ENCODE measurements at regions of chr4 and their contacts with region 1.

Region 1: DNA sequence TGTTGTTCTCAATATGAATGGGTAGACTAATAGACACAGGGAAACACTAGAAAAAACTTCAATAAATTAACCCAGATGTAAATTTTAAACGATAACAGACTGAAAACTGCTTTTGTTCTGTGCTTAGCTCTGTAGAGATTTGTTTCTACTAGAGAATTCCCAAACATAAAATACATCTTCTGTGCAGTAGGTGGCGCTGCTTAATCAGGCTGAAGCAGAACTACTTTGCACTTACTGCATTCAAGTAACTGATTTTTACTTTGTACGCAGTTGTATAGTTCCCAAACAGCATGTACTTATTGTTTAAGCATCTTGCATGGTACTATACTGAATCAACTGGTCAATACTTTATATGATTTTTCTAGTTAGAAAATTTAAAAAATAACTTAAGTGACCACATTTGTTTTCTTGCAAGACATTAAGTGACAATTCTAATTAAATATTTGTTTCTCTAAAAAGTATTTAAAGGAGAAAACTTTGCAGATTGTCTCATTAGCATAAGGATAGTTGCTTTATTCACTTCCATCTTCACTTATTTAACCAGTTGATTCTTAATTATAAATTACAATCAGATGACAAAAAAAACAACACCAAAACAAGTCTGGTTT is 490.6 kb downstream of the IL15 start:
- DNase-seq: peak; percentile 66
- ATAC-seq: peak; percentile 77
- H3K4me3 ChIP-seq: no peak overlapping the region
- H3K27ac ChIP-seq: no peak overlapping the region; the same call in 1 of the 2 replicates
- H3K4me1 ChIP-seq: 0 out of 4 replicates have a peak, but pooled peaks cover 0 to 3% of the 10 kb centered on the region in 2 experiments
- H3K27me3 ChIP-seq: no peaks in the 10 kb centered on the region
- CTCF ChIP-seq: peak; percentile 59 to 87 (median 63); a peak in 5 of 6 replicates
- POLR2A ChIP-seq: no peak
- RAD21 ChIP-seq: peak; percentile 93

Region 2: DNA sequence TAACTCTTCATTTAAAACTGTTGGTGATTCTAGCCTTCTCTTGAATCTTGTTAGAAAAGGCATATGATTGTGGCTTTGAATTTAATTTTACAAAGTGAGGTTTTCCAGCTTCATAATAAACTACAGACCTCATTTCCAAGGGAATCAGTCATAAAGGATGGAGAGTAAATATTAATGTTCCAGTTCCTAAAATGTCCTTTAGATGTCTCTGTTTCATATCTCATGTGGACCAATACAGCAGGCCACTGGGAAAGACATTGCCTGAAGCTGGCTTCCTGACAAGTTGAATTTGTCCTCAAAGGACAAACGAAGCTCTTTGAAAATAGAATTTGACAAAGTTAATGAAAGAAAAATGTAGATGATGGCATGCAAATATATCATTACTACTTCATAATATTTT is 780.9 kb before region 1 on chr4:
- CTCF ChIA-PET with region 1: interaction called, 4 read pairs
- POLR2A ChIA-PET with region 1: no interaction called
- RAD21 ChIA-PET with region 1: no interaction called
- intact Hi-C with region 1: loop called (anchors 10 kb)
- DNase-seq: peak; percentile 24
- ATAC-seq: peak; percentile 87
- H3K4me3 ChIP-seq: no peak overlapping the region
- H3K27ac ChIP-seq: no peak overlapping the region
- H3K4me1 ChIP-seq: peaks cover 0 to 4% of the 10 kb centered on the region in 2 experiments; a peak in 1 of 4 replicates
- H3K27me3 ChIP-seq: no peaks in the 10 kb centered on the region
- CTCF ChIP-seq: peak; percentile 24 to 63 (median 53); a peak in 3 of 6 replicates
- POLR2A ChIP-seq: no peak
- RAD21 ChIP-seq: peak; percentile 80

Region 3: GRCh38 chr4:141768954-141769353 is 358.0 kb before region 1 on chr4:
- CTCF ChIA-PET with region 1: no interaction called
- POLR2A ChIA-PET with region 1: no interaction called
- RAD21 ChIA-PET with region 1: no interaction called
- intact Hi-C with region 1: no loop called
- DNase-seq: no peak
- ATAC-seq: no peak
- H3K4me3 ChIP-seq: no peak overlapping the region
- H3K27ac ChIP-seq: no peak overlapping the region
- H3K4me1 ChIP-seq: no peaks in the 10 kb centered on the region
- H3K27me3 ChIP-seq: no peaks in the 10 kb centered on the region
- CTCF ChIP-seq: no peak
- POLR2A ChIP-seq: no peak
- RAD21 ChIP-seq: no peak

Region 4: DNA sequence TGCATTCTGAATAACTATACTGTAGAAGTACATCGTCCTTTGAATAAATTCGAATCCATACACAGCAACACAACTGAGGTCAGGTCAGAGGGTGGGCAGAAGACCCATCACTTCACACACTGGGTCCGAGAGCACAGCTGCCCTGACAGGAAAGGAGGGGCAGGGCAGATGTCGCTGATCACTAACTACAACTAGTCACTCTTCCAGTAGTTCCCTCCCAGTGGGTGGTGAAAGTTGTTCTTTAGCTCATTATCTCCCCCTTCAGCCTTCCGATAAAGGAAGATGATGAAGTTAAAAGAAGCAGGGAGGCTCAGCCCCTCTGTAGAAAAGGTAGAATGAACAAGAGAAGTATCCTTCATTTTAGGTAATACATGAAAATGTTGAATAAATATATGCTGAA is 440.2 kb after region 1 on chr4:
- CTCF ChIA-PET with region 1: no interaction called
- POLR2A ChIA-PET with region 1: no interaction called
- RAD21 ChIA-PET with region 1: no interaction called
- intact Hi-C with region 1: loop called (anchors 10 kb)
- DNase-seq: peak; percentile 51
- ATAC-seq: peak; percentile 92
- H3K4me3 ChIP-seq: no peak overlapping the region; a peak in 1 of 4 replicates
- H3K27ac ChIP-seq: peak overlapping the region; percentile 54; the same call in 1 of the 2 replicates
- H3K4me1 ChIP-seq: peaks cover 13 to 32% of the 10 kb centered on the region in 2 experiments; a peak in 3 of 4 replicates
- H3K27me3 ChIP-seq: no peaks in the 10 kb centered on the region
- CTCF ChIP-seq: peak; percentile 19 to 29 (median 22); a peak in 3 of 6 replicates
- POLR2A ChIP-seq: no peak
- RAD21 ChIP-seq: peak; percentile 68

Region 5: DNA sequence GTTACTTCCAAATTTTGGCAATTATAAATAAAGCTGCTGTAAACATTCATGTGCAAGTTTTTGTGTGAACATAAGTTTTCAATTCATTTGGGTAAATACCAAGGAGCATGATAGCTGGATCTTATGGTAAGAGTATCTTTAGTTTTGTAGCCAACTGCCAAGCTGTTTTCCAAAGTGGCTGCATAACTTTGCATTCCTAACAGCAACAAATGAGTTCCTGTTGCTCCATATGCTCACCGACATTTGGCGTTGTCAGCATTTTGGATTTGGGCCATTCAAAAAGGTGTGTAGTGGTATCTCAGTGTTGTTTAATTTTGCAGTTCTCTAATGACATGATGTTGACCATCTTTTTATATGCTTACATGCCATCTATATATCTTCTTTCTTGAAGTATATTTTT is 510.6 kb after region 1 on chr4:
- CTCF ChIA-PET with region 1: no interaction called
- POLR2A ChIA-PET with region 1: no interaction called
- RAD21 ChIA-PET with region 1: no interaction called
- intact Hi-C with region 1: no loop called
- DNase-seq: no peak
- ATAC-seq: no peak
- H3K4me3 ChIP-seq: no peak overlapping the region
- H3K27ac ChIP-seq: no peak overlapping the region
- H3K4me1 ChIP-seq: no peaks in the 10 kb centered on the region
- H3K27me3 ChIP-seq: no peaks in the 10 kb centered on the region
- CTCF ChIP-seq: no peak
- POLR2A ChIP-seq: no peak
- RAD21 ChIP-seq: no peak

Region 6: DNA sequence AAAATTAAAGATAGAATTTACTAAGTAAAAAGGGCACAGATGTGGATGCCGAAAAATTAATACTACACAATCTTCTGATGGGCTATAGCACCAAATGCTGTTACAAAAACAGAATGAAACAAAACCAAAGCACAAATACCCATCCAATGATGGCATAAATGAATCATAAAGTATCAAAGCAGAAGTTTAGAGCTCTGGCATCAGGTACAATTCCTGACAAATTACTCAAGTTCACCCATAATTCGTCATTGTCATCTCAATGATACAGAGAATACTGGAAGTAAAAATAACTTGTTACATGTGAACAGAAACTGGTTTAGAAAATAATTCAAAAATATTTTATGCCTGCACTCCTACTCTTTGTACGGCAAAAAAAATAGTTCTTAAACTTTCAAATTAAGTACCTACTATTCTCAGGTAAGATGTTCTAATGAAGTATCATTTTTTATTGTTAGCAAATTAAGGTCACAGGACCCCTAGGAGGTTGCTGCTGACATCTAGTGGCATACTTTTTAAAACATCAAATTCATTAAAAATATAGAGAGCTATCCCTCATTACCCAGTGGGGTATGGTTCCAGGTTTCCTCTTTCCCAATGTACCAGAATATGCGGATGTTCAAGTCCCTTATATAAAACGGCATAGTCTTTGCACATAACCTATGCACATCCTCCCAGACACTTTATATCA is 593.0 kb after region 1 on chr4:
- CTCF ChIA-PET with region 1: interaction called, 6 read pairs
- POLR2A ChIA-PET with region 1: no interaction called
- RAD21 ChIA-PET with region 1: no interaction called
- intact Hi-C with region 1: loop called (anchors 2 kb)
- DNase-seq: peak; percentile 68
- ATAC-seq: peak; percentile 81
- H3K4me3 ChIP-seq: no peak overlapping the region
- H3K27ac ChIP-seq: peak overlapping the region; percentile 65; the same call in 1 of the 2 replicates
- H3K4me1 ChIP-seq: peaks cover 21 to 32% of the 10 kb centered on the region in 2 experiments
- H3K27me3 ChIP-seq: no peaks in the 10 kb centered on the region
- CTCF ChIP-seq: peak; percentile 33 to 72 (median 58); a peak in 5 of 6 replicates
- POLR2A ChIP-seq: no peak
- RAD21 ChIP-seq: peak; percentile 82

Region 7: GRCh38 chr4:142984871-142985585 is 858.0 kb after region 1 on chr4:
- CTCF ChIA-PET with region 1: no interaction called
- POLR2A ChIA-PET with region 1: no interaction called
- RAD21 ChIA-PET with region 1: no interaction called
- intact Hi-C with region 1: loop called (anchors 10 kb)
- DNase-seq: peak; percentile 40
- ATAC-seq: peak; percentile 96
- H3K4me3 ChIP-seq: no peak overlapping the region
- H3K27ac ChIP-seq: no peak overlapping the region
- H3K4me1 ChIP-seq: no peaks in the 10 kb centered on the region
- H3K27me3 ChIP-seq: no peaks in the 10 kb centered on the region
- CTCF ChIP-seq: peak; percentile 57 to 66 (median 62); a peak in 5 of 6 replicates
- POLR2A ChIP-seq: no peak
- RAD21 ChIP-seq: peak; percentile 66

Region 8: DNA sequence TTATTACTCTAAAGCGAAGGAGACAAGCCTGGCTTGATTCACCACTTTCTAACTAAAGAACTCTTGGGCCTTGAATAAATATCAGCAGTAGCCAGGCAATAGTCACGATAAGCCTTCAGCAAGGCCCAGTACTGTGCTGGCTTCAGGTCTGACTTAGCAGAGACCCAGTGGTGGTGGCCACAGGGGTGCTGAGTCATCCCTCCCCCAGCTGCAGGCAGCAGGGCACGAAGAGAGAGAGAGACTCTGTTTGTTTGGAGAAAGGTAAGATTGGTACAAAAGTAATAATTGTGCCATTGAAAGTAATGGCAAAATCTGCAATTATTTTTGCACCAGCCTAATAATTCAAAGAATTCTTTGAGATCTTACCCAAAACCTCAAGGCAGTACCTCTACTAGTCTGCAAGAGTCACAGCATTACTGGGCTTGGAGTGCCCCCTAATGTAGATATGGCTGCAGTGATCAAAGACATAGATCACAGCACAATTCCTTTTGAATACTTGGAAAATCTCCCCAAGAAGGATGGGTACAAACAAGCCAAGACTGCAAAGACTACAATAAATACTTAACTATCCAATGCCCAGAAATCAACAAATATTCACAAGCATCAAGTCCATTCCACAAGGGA is 898.2 kb after region 1 on chr4:
- CTCF ChIA-PET with region 1: no interaction called
- POLR2A ChIA-PET with region 1: no interaction called
- RAD21 ChIA-PET with region 1: no interaction called
- intact Hi-C with region 1: loop called (anchors 10 kb)
- DNase-seq: peak; percentile 50
- ATAC-seq: peak; percentile 87
- H3K4me3 ChIP-seq: no peak overlapping the region
- H3K27ac ChIP-seq: no peak overlapping the region
- H3K4me1 ChIP-seq: peaks cover 0 to 6% of the 10 kb centered on the region in 2 experiments; a peak in 1 of 4 replicates
- H3K27me3 ChIP-seq: no peaks in the 10 kb centered on the region
- CTCF ChIP-seq: peak; percentile 48 to 65 (median 52); a peak in 5 of 6 replicates
- POLR2A ChIP-seq: no peak
- RAD21 ChIP-seq: peak; percentile 78